CD14-positive monocyte (primary cell): ENCODE measurements at regions of chr12 and their contacts with region 1.

Region 1: DNA sequence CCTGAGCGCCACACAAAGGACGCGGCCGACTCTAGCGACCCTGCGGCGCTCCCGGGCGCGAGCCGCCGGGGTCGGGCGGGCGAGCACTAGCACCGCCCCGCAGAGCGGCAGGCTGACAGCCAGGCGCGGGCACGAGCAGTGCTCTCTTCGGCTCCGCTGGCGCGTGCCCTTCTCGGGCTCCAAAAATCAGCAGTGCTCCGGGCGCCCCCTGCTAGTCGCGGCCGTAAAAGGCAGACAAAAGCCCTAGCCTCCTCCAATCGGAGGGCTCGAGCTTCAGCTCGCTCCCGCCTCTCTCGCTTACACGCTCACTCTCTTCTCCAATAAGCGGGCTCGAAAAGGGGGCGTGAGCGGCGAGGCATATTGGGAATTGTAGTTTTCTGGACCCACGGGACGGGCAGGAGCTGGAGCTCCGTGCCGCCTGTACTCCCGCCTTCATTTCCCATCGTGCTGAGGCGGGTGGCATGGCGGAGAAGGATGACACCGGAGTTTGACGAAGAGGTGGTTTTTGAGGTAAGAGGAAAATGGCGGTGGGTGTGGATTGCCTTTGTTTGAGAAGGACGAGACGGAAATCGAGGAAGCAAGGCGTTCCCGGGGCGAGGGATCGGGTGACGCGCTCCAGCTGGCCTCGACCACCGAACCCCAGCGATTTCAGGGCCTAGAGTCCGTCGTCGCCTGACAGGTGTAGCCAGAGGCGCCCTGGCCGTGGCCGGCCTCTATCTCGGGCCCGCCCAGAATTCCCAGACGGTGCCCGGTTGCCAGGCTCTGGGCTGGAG is at the starts of genes FGD6 and VEZT:
- DNase-seq: peak; percentile 97 to 99 (median 98)
- H3K4me3 ChIP-seq: peak within 1 kb of the TSS; percentile 85 to 99 (median 93)
- H3K4me3 Mint-ChIP-seq: peak within 1 kb of the TSS; percentile 97 to 99
- H3K27ac ChIP-seq: peak within 1 kb of the TSS; percentile 90 to 94
- H3K27ac Mint-ChIP-seq: peak within 1 kb of the TSS; percentile 91 to 97 (median 95)
- H3K4me1 ChIP-seq: peaks cover 18 to 45% of the 10 kb centered on the region in 2 donors
- H3K4me1 Mint-ChIP-seq: peaks cover 42% of the 10 kb centered on the region
- H3K27me3 ChIP-seq: no peaks in the 10 kb centered on the region
- H3K27me3 Mint-ChIP-seq: no peaks in the 10 kb centered on the region
- CTCF ChIP-seq: peak; percentile 72
- polyA plus RNA-seq, gene FGD6: 4.0 to 8.1 (median 5.3) TPM
- polyA plus RNA-seq, gene VEZT: 14.6 to 20.6 (median 16.7) TPM

Region 2: GRCh38 chr12:95117178-95117599 is 100.4 kb before region 1 on chr12:
- intact Hi-C with region 1: loop called (anchors 5 to 10 kb)
- DNase-seq: peak; percentile 59 to 76 (median 63)
- H3K4me3 ChIP-seq: no peak overlapping the region
- H3K4me3 Mint-ChIP-seq: no peak overlapping the region
- H3K27ac ChIP-seq: no peak overlapping the region
- H3K27ac Mint-ChIP-seq: no peak overlapping the region
- H3K4me1 ChIP-seq: peaks cover 0 to 4% of the 10 kb centered on the region in 2 donors
- H3K4me1 Mint-ChIP-seq: peaks cover 9% of the 10 kb centered on the region
- H3K27me3 ChIP-seq: no peaks in the 10 kb centered on the region
- H3K27me3 Mint-ChIP-seq: no peaks in the 10 kb centered on the region
- CTCF ChIP-seq: peak; percentile 75

Region 3: DNA sequence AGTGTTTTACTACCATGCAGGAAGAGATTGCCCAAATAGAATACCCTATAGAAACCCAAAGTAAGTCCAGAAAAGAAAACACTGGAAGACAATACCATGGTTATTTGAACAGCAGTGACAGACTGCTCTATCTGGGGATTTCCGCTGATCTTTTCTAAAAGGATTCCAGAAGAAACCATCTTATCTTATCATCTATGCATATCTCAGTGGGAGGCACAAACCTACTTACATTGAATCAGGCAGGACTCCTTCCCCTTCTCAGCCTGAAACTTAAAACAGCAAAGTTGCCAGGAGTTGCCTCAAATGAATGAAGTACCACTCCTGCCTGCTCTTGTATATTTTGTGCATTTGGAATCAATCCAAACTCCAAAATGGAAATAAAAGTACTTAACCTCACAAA is 87.5 kb before region 1 on chr12:
- intact Hi-C with region 1: loop called in 1 of 2 experiments (anchors 5 kb)
- DNase-seq: no peak
- H3K4me3 ChIP-seq: no peak overlapping the region
- H3K4me3 Mint-ChIP-seq: no peak overlapping the region
- H3K27ac ChIP-seq: no peak overlapping the region
- H3K27ac Mint-ChIP-seq: peak overlapping the region in 1 of 7 donors; percentile 36
- H3K4me1 ChIP-seq: peaks cover 39 to 50% of the 10 kb centered on the region in 2 donors
- H3K4me1 Mint-ChIP-seq: peaks cover 34% of the 10 kb centered on the region
- H3K27me3 ChIP-seq: no peaks in the 10 kb centered on the region
- H3K27me3 Mint-ChIP-seq: no peaks in the 10 kb centered on the region
- CTCF ChIP-seq: no peak

Region 4: GRCh38 chr12:95143621-95144205 is 73.8 kb before region 1 on chr12:
- intact Hi-C with region 1: no loop called
- DNase-seq: no peak
- H3K4me3 ChIP-seq: no peak overlapping the region
- H3K4me3 Mint-ChIP-seq: no peak overlapping the region
- H3K27ac ChIP-seq: no peak overlapping the region
- H3K27ac Mint-ChIP-seq: no peak overlapping the region
- H3K4me1 ChIP-seq: no peaks in the 10 kb centered on the region
- H3K4me1 Mint-ChIP-seq: no peaks in the 10 kb centered on the region
- H3K27me3 ChIP-seq: no peaks in the 10 kb centered on the region
- H3K27me3 Mint-ChIP-seq: peaks cover 0 to 6% (median 0%) of the 10 kb centered on the region in 3 donors
- CTCF ChIP-seq: no peak